ENCODE measurements at regions of chr19 and their contacts with region 1.

Region 1: GRCh38 chr19:45692187-45693105 is at the start of gene QPCTL:
- DNase-seq: peak; percentile 98
- H3K4me3 Mint-ChIP-seq: peak within 1 kb of the TSS; percentile 97
- H3K27ac Mint-ChIP-seq: peak within 1 kb of the TSS; percentile 98
- H3K4me1 Mint-ChIP-seq: peaks cover 34% of the 10 kb centered on the region
- H3K27me3 Mint-ChIP-seq: no peaks in the 10 kb centered on the region
- total RNA-seq, gene QPCTL: 12.0 to 14.1 TPM

Region 2: DNA sequence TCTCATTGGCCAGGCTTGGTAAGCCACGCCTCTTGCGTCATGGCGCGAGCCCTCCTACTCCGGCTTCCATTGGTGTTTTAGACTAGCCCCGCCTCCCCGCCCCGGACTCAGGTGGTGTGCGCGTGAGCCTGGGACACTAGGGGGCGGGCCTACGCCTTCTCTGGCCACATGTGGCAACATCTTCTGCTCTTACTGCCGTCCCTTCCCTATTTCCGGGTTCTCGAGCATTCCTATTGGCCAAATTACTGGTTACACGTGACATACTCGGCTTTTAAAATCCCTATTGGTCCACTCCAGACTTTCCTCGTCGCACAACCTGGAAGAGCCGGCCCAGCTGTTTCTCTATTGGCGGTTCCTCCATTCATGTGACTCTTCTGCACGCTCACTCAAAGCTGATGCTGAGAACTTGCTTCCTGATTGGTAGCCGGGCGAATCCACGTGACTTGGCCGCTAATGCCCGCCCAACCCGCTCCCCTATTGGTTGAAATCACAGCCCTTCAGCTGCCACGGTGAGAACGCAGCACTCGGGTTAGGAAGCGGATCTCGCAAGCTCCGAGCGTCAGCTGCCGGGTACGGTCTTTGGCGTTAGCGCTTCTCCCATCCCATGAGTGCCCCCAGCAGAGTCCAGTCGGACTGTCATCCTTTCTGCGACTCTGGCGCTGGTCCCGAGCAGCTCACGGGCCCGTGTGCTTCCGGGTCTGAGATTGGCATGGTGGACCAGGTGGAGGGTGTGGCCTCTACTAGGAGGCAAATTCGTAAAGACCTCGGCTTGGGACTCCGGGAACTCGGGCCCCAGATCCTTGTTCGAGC is 514.0 kb before region 1 on chr19 and contains the start of gene BLOC1S3:
- CTCF ChIA-PET with region 1: no interaction called
- intact Hi-C with region 1: loop called (anchors 10 kb)
- DNase-seq: peak; percentile 100
- H3K4me3 Mint-ChIP-seq: peak within 1 kb of the TSS; percentile 80
- H3K27ac Mint-ChIP-seq: peak within 1 kb of the TSS; percentile 86
- H3K4me1 Mint-ChIP-seq: peaks cover 44% of the 10 kb centered on the region
- H3K27me3 Mint-ChIP-seq: no peaks in the 10 kb centered on the region
- total RNA-seq, gene BLOC1S3: 5.1 to 6.5 TPM

Region 3: GRCh38 chr19:45405435-45406225 is 286.8 kb before region 1 on chr19:
- CTCF ChIA-PET with region 1: no interaction called
- intact Hi-C with region 1: no loop called
- DNase-seq: peak; percentile 90
- H3K4me3 Mint-ChIP-seq: peak overlapping the region; percentile 93
- H3K27ac Mint-ChIP-seq: peak overlapping the region; percentile 93
- H3K4me1 Mint-ChIP-seq: peaks cover 44% of the 10 kb centered on the region
- H3K27me3 Mint-ChIP-seq: peaks cover 30% of the 10 kb centered on the region

Region 4: GRCh38 chr19:45506246-45506990 is 186.0 kb before region 1 on chr19:
- CTCF ChIA-PET with region 1: no interaction called
- intact Hi-C with region 1: loop called (anchors 2 kb)
- DNase-seq: peak; percentile 99
- H3K4me3 Mint-ChIP-seq: peak overlapping the region; percentile 86
- H3K27ac Mint-ChIP-seq: peak overlapping the region; percentile 94
- H3K4me1 Mint-ChIP-seq: peaks cover 39% of the 10 kb centered on the region
- H3K27me3 Mint-ChIP-seq: no peaks in the 10 kb centered on the region

Region 5: GRCh38 chr19:45643024-45643926 is 49.2 kb before region 1 on chr19:
- CTCF ChIA-PET with region 1: interaction called, 11 read pairs
- intact Hi-C with region 1: loop called (anchors 1 kb)
- DNase-seq: peak; percentile 98
- H3K4me3 Mint-ChIP-seq: peak overlapping the region; percentile 65
- H3K27ac Mint-ChIP-seq: peak overlapping the region; percentile 99
- H3K4me1 Mint-ChIP-seq: peaks cover 46% of the 10 kb centered on the region
- H3K27me3 Mint-ChIP-seq: peaks cover 3% of the 10 kb centered on the region

Region 6: DNA sequence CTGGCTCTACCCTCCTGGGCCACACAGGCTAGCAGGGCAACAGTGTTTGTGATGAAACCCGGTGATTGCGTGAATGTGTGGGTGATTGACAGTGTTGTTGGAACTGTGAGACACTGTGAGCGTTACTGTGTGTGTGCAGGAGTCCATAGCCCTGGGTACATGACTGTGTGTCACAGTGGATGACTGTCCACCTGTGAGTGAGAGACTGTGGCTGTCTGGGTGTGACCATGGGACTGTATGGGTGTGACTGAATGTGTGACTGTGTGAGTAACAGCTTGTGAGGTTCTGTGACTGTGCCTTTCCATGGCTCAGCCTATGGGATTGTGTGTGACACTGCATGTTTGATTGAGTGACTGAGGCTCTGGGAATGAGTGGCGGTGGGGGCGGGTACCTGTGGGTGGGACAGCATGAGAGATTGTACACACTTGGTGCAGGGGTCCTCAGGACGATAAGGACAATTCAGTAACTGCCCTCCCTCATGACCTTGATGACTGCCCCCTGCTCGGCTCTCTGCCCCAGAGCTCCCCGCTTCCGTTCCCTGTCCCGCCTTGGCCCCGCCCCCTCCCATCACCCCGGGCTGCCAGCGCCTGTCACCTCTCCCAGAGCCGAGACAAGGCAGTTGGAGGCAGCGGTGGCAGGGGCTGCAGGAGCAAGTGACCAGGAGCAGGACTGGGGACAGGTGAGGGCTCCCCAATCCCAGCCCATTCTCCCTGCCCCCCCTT is 24.7 kb before region 1 on chr19 and contains the start of gene GIPR:
- CTCF ChIA-PET with region 1: no interaction called
- intact Hi-C with region 1: no loop called
- DNase-seq: peak; percentile 82
- H3K4me3 Mint-ChIP-seq: peak within 1 kb of the TSS; percentile 75
- H3K27ac Mint-ChIP-seq: no peak within 1 kb of the TSS
- H3K4me1 Mint-ChIP-seq: peaks cover 36% of the 10 kb centered on the region
- H3K27me3 Mint-ChIP-seq: peaks cover 20% of the 10 kb centered on the region
- total RNA-seq, gene GIPR: 1.8 to 2.3 TPM

Region 7: GRCh38 chr19:45717166-45717982 is 24.9 kb after region 1 on chr19:
- CTCF ChIA-PET with region 1: interaction called, 28 read pairs
- intact Hi-C with region 1: loop called (anchors 1 kb)
- DNase-seq: peak; percentile 99
- H3K4me3 Mint-ChIP-seq: peak overlapping the region; percentile 96
- H3K27ac Mint-ChIP-seq: peak overlapping the region; percentile 97
- H3K4me1 Mint-ChIP-seq: peaks cover 41% of the 10 kb centered on the region
- H3K27me3 Mint-ChIP-seq: no peaks in the 10 kb centered on the region

Region 8: GRCh38 chr19:45792470-45793177 is 100.2 kb after region 1 on chr19 and contains the start of gene DMWD:
- CTCF ChIA-PET with region 1: interaction called, 3 read pairs
- intact Hi-C with region 1: loop called (anchors 5 kb)
- DNase-seq: peak; percentile 100
- H3K4me3 Mint-ChIP-seq: peak within 1 kb of the TSS; percentile 93
- H3K27ac Mint-ChIP-seq: peak within 1 kb of the TSS; percentile 71
- H3K4me1 Mint-ChIP-seq: peaks cover 24% of the 10 kb centered on the region
- H3K27me3 Mint-ChIP-seq: peaks cover 13% of the 10 kb centered on the region
- total RNA-seq, gene DMWD: 28.6 to 29.1 TPM

Region 9: GRCh38 chr19:45994989-45995714 is 302.7 kb after region 1 on chr19 and contains the start of gene CCDC61:
- CTCF ChIA-PET with region 1: no interaction called
- intact Hi-C with region 1: loop called (anchors 1 kb)
- DNase-seq: peak; percentile 98
- H3K4me3 Mint-ChIP-seq: peak within 1 kb of the TSS; percentile 40
- H3K27ac Mint-ChIP-seq: no peak within 1 kb of the TSS
- H3K4me1 Mint-ChIP-seq: peaks cover 23% of the 10 kb centered on the region
- H3K27me3 Mint-ChIP-seq: no peaks in the 10 kb centered on the region
- total RNA-seq, gene CCDC61: 26.4 to 29.3 TPM

Measured in activated naive CD4-positive, alpha-beta T cell treated with anti-CD3 and anti-CD28 coated beads for 36 hours (primary cell).